HEK293T (cell line): ENCODE measurements at regions of chr6 and their contacts with region 1.

Region 1: GRCh38 chr6:28758046-28758817 is 165.6 kb downstream of the TRIM27 start:
- DNase-seq: no peak

Region 2: GRCh38 chr6:28729501-28730402 is 28.5 kb before region 1 on chr6:
- CTCF ChIA-PET with region 1: interaction called, 3 read pairs
- POLR2A ChIA-PET with region 1: interaction called, 20 read pairs
- DNase-seq: peak; percentile 16

Region 3: DNA sequence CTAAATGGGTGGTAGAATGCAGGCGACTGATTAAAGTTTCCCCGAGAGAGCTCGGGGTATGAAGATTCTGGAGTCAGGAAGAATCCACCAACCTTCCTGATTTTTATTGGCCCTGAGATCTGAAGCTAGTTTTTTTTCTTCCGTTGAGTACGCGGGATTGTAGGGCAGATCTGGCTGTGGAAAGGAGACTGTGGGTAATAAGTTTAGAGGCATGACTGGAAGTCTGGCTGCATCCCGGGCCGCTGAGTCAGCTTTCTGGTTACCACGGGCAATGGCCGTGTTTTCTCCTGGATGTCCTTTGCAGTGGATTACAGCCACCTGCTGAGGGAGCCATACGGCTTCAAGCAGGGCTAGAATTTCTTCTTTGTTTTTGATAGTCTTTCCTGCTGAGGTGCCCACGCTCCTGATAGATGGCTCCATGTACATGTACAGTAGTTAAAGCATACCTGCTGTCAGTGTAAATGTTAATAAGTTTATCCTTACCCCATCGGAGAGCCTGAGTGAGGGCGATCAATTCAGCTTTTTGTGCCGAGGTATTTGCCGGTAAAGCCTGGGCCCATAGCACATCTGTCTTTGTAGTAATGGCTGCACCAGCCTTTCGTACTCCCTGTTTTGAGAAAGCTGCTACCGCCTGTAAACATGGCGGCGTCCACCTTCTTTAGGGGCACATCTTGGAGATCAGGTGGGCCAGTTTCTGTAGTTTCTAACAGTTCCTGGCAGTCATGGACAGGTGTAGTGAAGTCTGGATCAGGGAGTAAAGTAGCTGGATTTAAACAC is 11.6 kb after region 1 on chr6:
- CTCF ChIA-PET with region 1: interaction called, 4 read pairs
- POLR2A ChIA-PET with region 1: interaction called, 11 read pairs
- DNase-seq: no peak